HCT116 (cell line): ENCODE measurements at regions of chr22 and their contacts with region 1.

Region 1: GRCh38 chr22:39622881-39623367 is 52.4 kb downstream of the CACNA1I start:
- DNase-seq: peak; percentile 40
- ATAC-seq: peak; percentile 90
- H3K4me3 ChIP-seq: no peak overlapping the region
- H3K27ac ChIP-seq: no peak overlapping the region
- H3K4me1 ChIP-seq: no peaks in the 10 kb centered on the region; a peak in 1 of 4 replicates
- H3K27me3 ChIP-seq: no peaks in the 10 kb centered on the region
- CTCF ChIP-seq: peak; percentile 63 to 87 (median 84); a peak in 5 of 6 replicates
- POLR2A ChIP-seq: no peak
- RAD21 ChIP-seq: peak; percentile 85

Region 2: GRCh38 chr22:39808081-39808480 is 185.2 kb after region 1 on chr22:
- CTCF ChIA-PET with region 1: no interaction called
- POLR2A ChIA-PET with region 1: no interaction called
- RAD21 ChIA-PET with region 1: no interaction called
- intact Hi-C with region 1: loop called (anchors 10 kb)
- DNase-seq: peak; percentile 31
- ATAC-seq: peak; percentile 80
- H3K4me3 ChIP-seq: no peak overlapping the region
- H3K27ac ChIP-seq: no peak overlapping the region
- H3K4me1 ChIP-seq: no peaks in the 10 kb centered on the region
- H3K27me3 ChIP-seq: peaks cover 66% of the 10 kb centered on the region
- CTCF ChIP-seq: peak; percentile 49 to 70 (median 70); a peak in 5 of 6 replicates
- POLR2A ChIP-seq: no peak
- RAD21 ChIP-seq: peak; percentile 48